CD4-positive, alpha-beta memory T cell (primary cell): ENCODE measurements at regions of chr17 and their contacts with region 1.

Region 1: GRCh38 chr17:41648411-41649195 is 24.2 kb upstream of the KRT17 start:
- DNase-seq: peak; percentile 75 to 84 (median 81)
- H3K4me3 ChIP-seq: peak overlapping the region; percentile 50 to 76
- H3K4me3 Mint-ChIP-seq: peak overlapping the region; percentile 74 to 91 (median 82)
- H3K27ac ChIP-seq: peak overlapping the region; percentile 49
- H3K27ac Mint-ChIP-seq: peak overlapping the region in 6 of 7 donors; percentile 64 to 92 (median 86)
- H3K4me1 ChIP-seq: peaks cover 13% of the 10 kb centered on the region
- H3K4me1 Mint-ChIP-seq: peaks cover 2 to 11% (median 8%) of the 10 kb centered on the region in 4 donors
- H3K27me3 ChIP-seq: no peaks in the 10 kb centered on the region
- H3K27me3 Mint-ChIP-seq: peaks cover 0 to 2% of the 10 kb centered on the region in 2 donors

Region 2: DNA sequence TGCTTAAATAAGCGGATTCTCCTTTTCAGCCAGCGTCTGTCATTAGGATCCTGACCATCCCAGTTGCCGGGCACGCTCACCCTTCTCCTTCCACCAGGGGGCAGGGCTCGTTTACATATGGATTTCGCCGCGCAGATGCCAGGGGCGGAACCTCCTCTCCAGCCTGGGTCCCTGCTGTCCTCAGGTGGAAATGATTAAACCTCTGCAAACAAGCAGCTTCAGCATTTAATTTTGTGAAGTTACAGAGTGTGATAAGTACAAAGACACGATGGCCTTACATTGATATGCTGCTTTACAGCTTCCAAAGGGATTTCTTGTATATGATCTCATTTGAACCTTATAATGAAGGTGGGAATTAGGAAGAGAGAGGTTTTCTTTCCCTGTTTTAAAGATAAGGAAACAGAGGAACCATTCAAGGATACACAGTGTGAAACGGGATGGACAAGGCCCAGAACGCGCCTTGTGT is 845.0 kb before region 1 on chr17:
- CTCF ChIA-PET with region 1: interaction called, 8 read pairs
- POLR2A ChIA-PET with region 1: no interaction called
- intact Hi-C with region 1: loop called (anchors 1 kb)
- DNase-seq: peak; percentile 59 to 75 (median 62)
- H3K4me3 ChIP-seq: no peak overlapping the region
- H3K4me3 Mint-ChIP-seq: no peak overlapping the region
- H3K27ac ChIP-seq: no peak overlapping the region
- H3K27ac Mint-ChIP-seq: no peak overlapping the region
- H3K4me1 ChIP-seq: peaks cover 4% of the 10 kb centered on the region
- H3K4me1 Mint-ChIP-seq: peaks cover 2 to 4% (median 3%) of the 10 kb centered on the region in 4 donors
- H3K27me3 ChIP-seq: peaks cover 11% of the 10 kb centered on the region
- H3K27me3 Mint-ChIP-seq: peaks cover 19 to 34% of the 10 kb centered on the region in 2 donors

Region 3: DNA sequence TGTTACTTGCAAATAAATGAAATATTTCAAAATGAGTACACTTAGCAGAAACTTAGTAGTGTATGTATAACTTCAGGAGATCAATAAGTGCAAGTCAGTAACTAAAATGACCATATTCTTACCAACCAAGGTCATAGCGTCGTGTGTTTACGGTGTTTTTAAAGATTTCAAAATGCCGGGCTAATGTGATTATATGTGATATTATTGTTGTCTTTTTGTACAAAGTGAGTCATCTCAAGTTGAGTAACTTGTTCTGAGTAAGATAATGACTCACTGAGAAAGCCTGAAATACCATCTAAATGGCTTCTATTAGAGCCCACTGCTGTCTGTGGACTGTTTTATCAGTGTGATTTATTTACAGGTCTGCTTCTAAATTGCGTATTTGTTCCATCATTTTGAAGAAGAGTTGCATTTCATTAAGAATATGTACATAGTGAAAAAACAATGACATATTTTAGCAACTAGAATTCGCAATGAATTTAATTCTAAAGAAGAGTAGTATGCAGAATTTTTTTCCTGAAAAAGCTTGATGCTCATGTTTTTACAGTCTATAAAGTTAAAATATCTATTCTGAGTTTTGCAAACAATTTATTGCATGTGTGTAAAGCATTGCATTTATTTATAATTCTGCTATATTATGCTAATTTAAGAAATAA is 794.3 kb before region 1 on chr17:
- CTCF ChIA-PET with region 1: interaction called, 28 read pairs
- POLR2A ChIA-PET with region 1: interaction called, 4 read pairs
- intact Hi-C with region 1: loop called (anchors 1 kb)
- DNase-seq: no peak
- H3K4me3 ChIP-seq: no peak overlapping the region
- H3K4me3 Mint-ChIP-seq: no peak overlapping the region
- H3K27ac ChIP-seq: no peak overlapping the region
- H3K27ac Mint-ChIP-seq: no peak overlapping the region
- H3K4me1 ChIP-seq: no peaks in the 10 kb centered on the region
- H3K4me1 Mint-ChIP-seq: peaks cover 0 to 4% (median 2%) of the 10 kb centered on the region in 4 donors
- H3K27me3 ChIP-seq: no peaks in the 10 kb centered on the region
- H3K27me3 Mint-ChIP-seq: peaks cover 8 to 10% of the 10 kb centered on the region in 2 donors

Region 4: GRCh38 chr17:40859536-40859935 is 789.1 kb before region 1 on chr17:
- CTCF ChIA-PET with region 1: interaction called, 28 read pairs
- POLR2A ChIA-PET with region 1: interaction called, 4 read pairs
- intact Hi-C with region 1: loop called (anchors 1 kb)
- DNase-seq: no peak
- H3K4me3 ChIP-seq: no peak overlapping the region
- H3K4me3 Mint-ChIP-seq: no peak overlapping the region
- H3K27ac ChIP-seq: no peak overlapping the region
- H3K27ac Mint-ChIP-seq: no peak overlapping the region
- H3K4me1 ChIP-seq: no peaks in the 10 kb centered on the region
- H3K4me1 Mint-ChIP-seq: peaks cover 0 to 4% (median 2%) of the 10 kb centered on the region in 4 donors
- H3K27me3 ChIP-seq: no peaks in the 10 kb centered on the region
- H3K27me3 Mint-ChIP-seq: peaks cover 2 to 4% of the 10 kb centered on the region in 2 donors

Region 5: GRCh38 chr17:40903129-40904065 is 745.2 kb before region 1 on chr17:
- CTCF ChIA-PET with region 1: interaction called, 49 read pairs
- POLR2A ChIA-PET with region 1: no interaction called
- intact Hi-C with region 1: no loop called
- DNase-seq: no peak
- H3K4me3 ChIP-seq: no peak overlapping the region
- H3K4me3 Mint-ChIP-seq: no peak overlapping the region
- H3K27ac ChIP-seq: no peak overlapping the region
- H3K27ac Mint-ChIP-seq: no peak overlapping the region
- H3K4me1 ChIP-seq: no peaks in the 10 kb centered on the region
- H3K4me1 Mint-ChIP-seq: peaks cover 0 to 1% (median 0%) of the 10 kb centered on the region in 4 donors
- H3K27me3 ChIP-seq: no peaks in the 10 kb centered on the region
- H3K27me3 Mint-ChIP-seq: peaks cover 28 to 45% of the 10 kb centered on the region in 2 donors

Region 6: DNA sequence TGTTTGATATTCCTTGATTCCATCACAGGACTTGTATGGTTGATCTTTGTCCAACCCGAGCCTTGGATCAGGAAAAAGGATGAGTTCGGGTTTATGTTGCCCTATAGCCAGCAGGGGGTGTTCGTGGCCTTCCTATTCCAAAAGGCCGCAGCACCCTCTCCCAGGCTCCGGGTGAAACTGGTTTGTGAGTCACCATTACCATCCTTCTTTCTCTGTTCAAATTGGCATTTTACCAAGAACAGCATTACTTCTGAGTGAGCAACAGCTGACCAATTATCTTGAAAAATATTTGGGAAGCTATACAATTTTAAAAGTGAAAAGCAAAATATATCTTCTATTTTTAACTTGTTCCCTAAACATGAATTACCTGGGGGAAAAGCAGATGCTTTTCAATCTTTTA is 739.3 kb before region 1 on chr17:
- CTCF ChIA-PET with region 1: interaction called, 49 read pairs
- POLR2A ChIA-PET with region 1: no interaction called
- intact Hi-C with region 1: loop called (anchors 1 kb)
- DNase-seq: peak; percentile 48 to 69 (median 60)
- H3K4me3 ChIP-seq: no peak overlapping the region
- H3K4me3 Mint-ChIP-seq: no peak overlapping the region
- H3K27ac ChIP-seq: no peak overlapping the region
- H3K27ac Mint-ChIP-seq: no peak overlapping the region
- H3K4me1 ChIP-seq: no peaks in the 10 kb centered on the region
- H3K4me1 Mint-ChIP-seq: no peaks in the 10 kb centered on the region
- H3K27me3 ChIP-seq: no peaks in the 10 kb centered on the region
- H3K27me3 Mint-ChIP-seq: peaks cover 23 to 39% of the 10 kb centered on the region in 2 donors

Region 7: GRCh38 chr17:41627838-41628370 is 20.7 kb before region 1 on chr17:
- CTCF ChIA-PET with region 1: no interaction called
- POLR2A ChIA-PET with region 1: no interaction called
- intact Hi-C with region 1: no loop called
- DNase-seq: no peak
- H3K4me3 ChIP-seq: no peak overlapping the region
- H3K4me3 Mint-ChIP-seq: no peak overlapping the region
- H3K27ac ChIP-seq: no peak overlapping the region
- H3K27ac Mint-ChIP-seq: no peak overlapping the region
- H3K4me1 ChIP-seq: no peaks in the 10 kb centered on the region
- H3K4me1 Mint-ChIP-seq: no peaks in the 10 kb centered on the region
- H3K27me3 ChIP-seq: no peaks in the 10 kb centered on the region
- H3K27me3 Mint-ChIP-seq: peaks cover 1 to 11% of the 10 kb centered on the region in 2 donors

Region 8: DNA sequence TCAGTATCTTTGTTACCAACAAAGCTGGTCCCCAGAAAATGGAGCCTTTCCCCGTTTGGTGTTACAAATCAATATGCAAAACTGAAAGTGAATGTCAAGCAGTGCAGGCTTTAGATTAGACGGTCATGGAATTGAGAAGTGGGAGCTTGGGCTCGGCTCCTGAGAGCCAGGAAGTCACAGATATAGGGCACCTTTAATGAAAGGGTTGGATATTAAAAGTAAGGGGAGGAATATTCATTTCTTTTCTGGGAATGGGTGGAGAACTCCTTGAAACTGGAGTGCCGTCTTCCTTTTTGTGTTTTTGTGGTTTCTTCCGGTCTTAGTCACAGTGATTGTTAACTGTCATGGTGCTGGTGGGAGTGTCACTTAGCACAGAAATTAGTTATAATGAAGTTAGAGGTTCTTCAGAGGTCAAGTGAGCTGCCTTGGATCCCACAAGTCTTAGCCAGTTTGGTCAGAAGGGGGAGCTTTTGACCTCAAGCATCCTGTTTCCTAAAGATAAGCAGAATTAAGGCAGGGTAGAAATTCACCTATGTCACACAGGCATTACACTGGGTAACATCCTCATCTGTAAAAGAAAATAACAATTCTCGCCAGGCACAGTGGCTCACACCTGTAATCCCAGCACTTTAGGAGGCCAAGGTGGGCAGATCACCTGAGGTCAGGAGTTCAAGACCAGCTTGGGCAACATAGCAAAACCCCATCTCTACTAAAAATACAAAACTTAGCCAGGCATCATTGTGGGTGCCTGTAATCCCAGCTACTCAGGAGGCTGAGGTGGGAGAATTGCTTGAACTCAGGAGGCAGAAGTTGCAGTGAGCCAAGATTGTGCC is 30.5 kb after region 1 on chr17:
- CTCF ChIA-PET with region 1: interaction called, 16 read pairs
- POLR2A ChIA-PET with region 1: interaction called, 7 read pairs
- intact Hi-C with region 1: no loop called
- DNase-seq: peak; percentile 78 to 90 (median 83)
- H3K4me3 ChIP-seq: peak overlapping the region; percentile 32 to 51
- H3K4me3 Mint-ChIP-seq: peak overlapping the region; percentile 84 to 96 (median 90)
- H3K27ac ChIP-seq: peak overlapping the region; percentile 59
- H3K27ac Mint-ChIP-seq: peak overlapping the region; percentile 91 to 99 (median 97)
- H3K4me1 ChIP-seq: peaks cover 37% of the 10 kb centered on the region
- H3K4me1 Mint-ChIP-seq: peaks cover 16 to 33% (median 27%) of the 10 kb centered on the region in 4 donors
- H3K27me3 ChIP-seq: no peaks in the 10 kb centered on the region
- H3K27me3 Mint-ChIP-seq: no peaks in the 10 kb centered on the region

Region 9: DNA sequence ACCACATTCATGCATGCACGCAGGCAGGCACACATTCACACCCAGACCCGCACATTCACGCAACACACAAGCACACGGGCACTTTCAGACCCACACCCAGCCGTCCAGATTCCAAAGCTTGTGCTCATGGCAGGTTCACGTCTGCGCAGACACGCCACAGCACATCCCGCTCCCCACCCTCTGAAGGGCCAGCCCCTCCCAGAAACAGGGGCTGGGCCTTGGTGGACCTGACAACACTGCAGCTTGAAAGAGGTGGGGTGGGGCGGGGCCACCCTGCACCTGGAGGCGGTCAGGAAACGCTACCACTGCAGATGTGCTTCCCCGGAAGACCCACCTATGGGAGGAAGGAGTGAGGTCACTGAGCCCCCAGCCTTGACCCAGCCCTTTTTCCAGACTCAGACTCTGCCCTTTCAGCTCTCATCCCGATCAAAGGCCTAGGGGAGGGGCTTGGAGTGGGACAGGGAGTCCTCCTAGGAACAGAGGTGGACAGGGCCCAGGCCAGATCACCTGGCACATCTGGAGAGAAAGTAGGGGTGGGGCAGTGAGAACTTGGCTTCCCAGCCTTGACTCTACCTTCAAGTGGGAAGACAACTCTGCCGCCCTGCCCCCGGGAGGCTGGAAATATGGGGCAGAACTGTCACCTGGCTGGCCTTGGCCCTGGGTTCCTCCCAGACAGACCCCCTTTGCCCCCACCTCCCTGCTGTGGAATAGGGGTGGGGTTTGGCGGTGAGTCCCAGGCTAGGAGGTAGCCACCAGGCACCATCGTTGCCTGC is 152.2 kb after region 1 on chr17:
- CTCF ChIA-PET with region 1: no interaction called
- POLR2A ChIA-PET with region 1: no interaction called
- intact Hi-C with region 1: no loop called
- DNase-seq: peak in 1 of 5 donors; percentile 39
- H3K4me3 ChIP-seq: no peak overlapping the region
- H3K4me3 Mint-ChIP-seq: peak overlapping the region in 1 of 8 donors; percentile 5
- H3K27ac ChIP-seq: no peak overlapping the region
- H3K27ac Mint-ChIP-seq: peak overlapping the region in 1 of 7 donors; percentile 68
- H3K4me1 ChIP-seq: no peaks in the 10 kb centered on the region
- H3K4me1 Mint-ChIP-seq: peaks cover 1 to 11% (median 4%) of the 10 kb centered on the region in 4 donors
- H3K27me3 ChIP-seq: no peaks in the 10 kb centered on the region
- H3K27me3 Mint-ChIP-seq: peaks cover 0 to 3% of the 10 kb centered on the region in 2 donors